Mammary epithelial cell (primary cell): ENCODE measurements at regions of chr6 and their contacts with region 1.

Region 1: DNA sequence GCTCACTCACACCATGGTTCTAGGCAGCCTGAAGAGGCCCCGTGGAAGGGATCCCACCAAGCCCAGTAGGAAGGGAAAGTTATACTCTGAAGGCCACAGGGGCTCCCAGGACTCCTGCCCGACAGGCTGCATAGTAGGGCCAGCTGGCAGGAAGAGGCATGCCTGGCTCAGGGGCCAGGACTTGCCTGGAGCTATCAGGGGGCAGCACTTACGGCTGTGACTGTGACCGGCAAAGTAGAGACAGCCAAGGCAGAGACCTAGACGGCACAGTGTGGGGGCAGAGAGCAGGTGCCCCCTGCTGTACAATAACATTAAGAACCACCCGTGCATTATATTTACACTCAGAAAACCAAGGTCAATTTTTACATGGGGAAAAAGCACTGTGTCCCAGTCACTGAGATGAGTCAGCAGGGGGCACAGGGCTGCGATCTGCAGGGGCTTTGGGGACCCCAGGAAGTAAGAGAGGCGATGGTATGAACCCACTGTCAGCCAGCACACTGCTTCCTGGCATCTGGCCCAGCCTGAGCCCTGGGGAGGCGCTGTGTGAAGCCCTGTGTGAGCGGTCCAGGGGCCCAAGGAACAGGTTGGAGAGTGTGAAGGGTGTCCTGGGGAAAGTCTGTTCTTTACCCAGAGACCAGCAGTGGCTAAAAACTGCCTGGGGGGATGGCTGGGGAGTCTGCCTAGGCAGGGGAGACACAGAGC is 9.9 kb downstream of the CCDC167 start:
- DNase-seq: no peak
- H3K4me3 ChIP-seq: no peak overlapping the region
- H3K27ac ChIP-seq: no peak overlapping the region
- H3K4me1 ChIP-seq: peaks cover 3% of the 10 kb centered on the region
- H3K27me3 ChIP-seq: no peaks in the 10 kb centered on the region
- CTCF ChIP-seq: no peak

Region 2: GRCh38 chr6:37324131-37325033 is 165.4 kb before region 1 on chr6:
- CTCF ChIA-PET with region 1: interaction called, 16 read pairs
- dilution Hi-C with region 1: no loop called
- in situ Hi-C with region 1: no loop called
- intact Hi-C with region 1: no loop called
- DNase-seq: peak; percentile 78
- H3K4me3 ChIP-seq: no peak overlapping the region
- H3K27ac ChIP-seq: no peak overlapping the region
- H3K4me1 ChIP-seq: peaks cover 15% of the 10 kb centered on the region
- H3K27me3 ChIP-seq: no peaks in the 10 kb centered on the region
- CTCF ChIP-seq: no peak

Region 3: DNA sequence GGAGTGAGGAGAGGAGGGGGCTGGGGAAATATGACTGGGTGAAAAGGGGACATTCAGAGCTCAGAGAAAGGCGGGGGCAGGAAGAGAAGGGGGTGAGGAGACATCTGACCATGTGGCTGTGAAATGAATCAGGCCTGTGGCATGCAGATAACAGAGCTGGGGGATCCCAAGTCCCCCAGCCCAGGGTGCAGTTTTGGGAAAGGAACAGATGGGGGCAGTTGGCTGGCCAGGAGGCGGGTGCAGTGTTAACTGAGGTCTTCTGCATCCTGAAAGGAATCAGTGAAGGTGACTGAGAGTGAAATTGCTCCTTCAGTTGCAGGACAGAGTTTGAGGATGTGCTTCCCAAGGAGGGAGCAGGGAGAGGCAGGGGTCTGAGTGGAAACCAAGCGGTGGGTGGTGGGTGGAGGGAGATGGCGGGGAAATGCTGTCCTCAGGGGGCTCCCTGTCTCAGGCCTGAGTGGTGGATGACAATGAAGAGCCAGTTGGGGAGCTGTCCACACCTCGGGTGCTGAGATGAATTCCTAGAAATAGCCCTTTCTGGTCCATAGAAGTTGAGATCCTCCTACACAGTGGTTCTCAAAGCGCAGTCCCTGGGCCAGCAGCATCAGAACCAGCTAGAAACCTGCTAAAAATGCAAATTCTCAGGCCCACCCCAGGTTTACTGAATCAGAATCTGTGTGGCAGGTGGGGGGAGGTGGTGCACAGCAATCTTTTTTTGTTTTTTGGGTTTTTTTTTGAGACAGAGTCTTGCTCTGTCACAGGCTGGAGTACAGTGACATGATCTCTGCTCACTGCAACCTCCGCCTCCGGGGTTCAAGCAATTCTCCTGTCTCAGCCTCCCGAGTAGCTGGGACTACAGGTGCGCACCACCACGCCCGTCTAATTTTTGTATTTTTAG is 35.9 kb after region 1 on chr6:
- CTCF ChIA-PET with region 1: no interaction called
- dilution Hi-C with region 1: loop called (anchors 5 kb)
- in situ Hi-C with region 1: no loop called
- intact Hi-C with region 1: no loop called
- DNase-seq: no peak
- H3K4me3 ChIP-seq: no peak overlapping the region
- H3K27ac ChIP-seq: no peak overlapping the region
- H3K4me1 ChIP-seq: peaks cover 8% of the 10 kb centered on the region
- H3K27me3 ChIP-seq: no peaks in the 10 kb centered on the region
- CTCF ChIP-seq: no peak

Region 4: DNA sequence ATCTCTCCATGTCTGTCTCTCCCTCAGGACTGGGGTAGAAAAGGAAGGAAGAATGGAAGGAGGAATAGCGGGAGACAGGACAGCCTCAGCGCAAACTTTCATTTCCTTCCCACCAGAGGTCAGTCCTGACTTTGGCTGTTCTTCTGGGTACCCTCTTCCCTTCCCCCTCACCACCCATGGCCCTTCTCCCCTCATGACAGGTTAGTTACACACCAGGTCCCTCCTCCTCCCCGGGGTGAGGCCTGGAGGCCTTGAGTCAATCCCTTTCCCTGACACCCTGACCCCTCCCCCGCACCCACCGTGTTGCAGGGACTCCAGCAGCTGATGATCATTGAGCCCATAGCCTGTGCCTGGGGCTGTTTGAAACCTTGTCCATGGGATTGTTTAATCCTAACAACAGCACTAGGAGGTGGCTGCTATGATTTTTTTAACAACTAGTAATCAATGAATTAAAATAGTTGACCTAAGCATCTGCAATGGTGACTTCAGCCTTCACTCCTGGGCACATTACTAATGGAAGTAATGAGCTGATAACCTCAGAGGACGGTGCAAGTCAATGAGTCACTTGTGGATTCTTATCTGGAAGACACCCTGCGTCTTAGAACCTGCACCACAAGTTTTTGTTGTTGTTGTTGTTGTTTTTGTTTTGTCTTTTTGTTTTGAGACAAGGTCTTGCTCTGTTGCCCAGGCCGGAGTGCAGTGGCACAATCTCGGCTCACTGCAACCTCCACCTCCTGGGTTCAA is 56.5 kb after region 1 on chr6:
- CTCF ChIA-PET with region 1: no interaction called
- dilution Hi-C with region 1: no loop called
- in situ Hi-C with region 1: no loop called
- intact Hi-C with region 1: no loop called
- DNase-seq: no peak
- H3K4me3 ChIP-seq: no peak overlapping the region
- H3K27ac ChIP-seq: no peak overlapping the region
- H3K4me1 ChIP-seq: peaks cover 24% of the 10 kb centered on the region
- H3K27me3 ChIP-seq: no peaks in the 10 kb centered on the region
- CTCF ChIP-seq: no peak

Region 5: DNA sequence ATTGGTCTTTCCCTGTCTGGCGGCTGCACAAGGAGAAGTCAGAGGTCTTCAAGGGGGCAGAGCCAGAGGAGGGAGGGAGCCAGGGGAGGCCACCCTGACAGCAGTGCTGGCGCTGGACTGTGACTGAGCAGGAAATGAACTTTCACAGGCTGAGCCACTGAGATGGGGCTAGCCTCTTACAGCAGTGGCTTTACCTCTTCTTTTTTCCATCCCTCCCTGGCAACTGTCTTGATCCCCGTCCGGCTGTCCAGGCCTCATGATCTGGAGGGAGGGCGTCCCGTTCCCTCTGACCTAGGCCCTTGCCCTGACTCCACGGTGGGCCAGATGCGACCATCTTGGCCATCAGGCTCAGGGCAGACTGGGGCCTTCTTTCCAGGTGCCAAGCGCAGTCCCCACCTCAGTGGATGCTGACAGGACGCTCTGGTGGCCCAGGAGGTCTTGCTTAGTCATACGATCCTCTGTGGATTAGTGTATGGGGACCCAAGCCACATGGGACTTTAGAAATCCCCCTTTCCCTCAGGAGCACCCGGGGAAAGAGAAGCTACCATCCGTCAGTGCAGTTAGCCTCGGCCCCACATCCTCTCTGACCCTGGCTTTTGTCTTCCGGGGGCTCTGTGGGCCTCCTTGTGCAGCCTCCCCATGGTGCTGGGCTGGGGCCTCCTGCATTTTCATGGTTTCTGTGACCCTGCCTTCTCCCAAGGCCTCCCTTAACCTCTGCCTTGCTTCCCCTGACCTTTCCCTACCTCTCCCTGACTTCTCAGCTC is 67.3 kb after region 1 on chr6:
- CTCF ChIA-PET with region 1: no interaction called
- dilution Hi-C with region 1: loop called (anchors 5 kb)
- in situ Hi-C with region 1: no loop called
- intact Hi-C with region 1: no loop called
- DNase-seq: no peak
- H3K4me3 ChIP-seq: no peak overlapping the region
- H3K27ac ChIP-seq: no peak overlapping the region
- H3K4me1 ChIP-seq: peaks cover 29% of the 10 kb centered on the region
- H3K27me3 ChIP-seq: no peaks in the 10 kb centered on the region
- CTCF ChIP-seq: no peak